ENCODE measurements at regions of chr13 and their contacts with region 1.

Region 1: DNA sequence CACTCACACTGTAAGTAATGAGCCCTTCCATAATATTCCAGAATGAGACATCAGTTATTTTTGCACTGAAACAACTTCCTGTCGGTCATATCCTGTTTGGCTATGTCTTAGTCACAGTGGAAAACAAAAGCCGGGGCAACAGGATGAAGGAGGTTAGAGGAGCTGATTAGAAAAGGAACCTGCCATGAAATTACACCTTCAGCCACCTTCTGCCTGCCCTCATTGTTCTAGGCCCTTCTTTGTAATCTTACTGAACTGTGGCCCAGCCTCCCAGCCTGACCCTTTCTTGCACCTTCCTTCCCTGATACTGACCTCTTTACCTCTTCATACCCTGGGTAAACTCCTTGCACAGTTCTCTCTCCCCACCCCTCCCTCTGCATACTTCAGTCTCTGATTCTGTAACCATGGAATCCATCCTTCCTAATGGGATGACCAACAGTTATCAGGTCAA is 67.3 kb downstream of the DOCK9 start:
- DNase-seq: no peak
- ATAC-seq: peak; percentile 60

Region 2: GRCh38 chr13:98869408-98870090 is 41.0 kb before region 1 on chr13:
- intact Hi-C with region 1: no loop called
- DNase-seq: no peak
- ATAC-seq: peak; percentile 37

Region 3: DNA sequence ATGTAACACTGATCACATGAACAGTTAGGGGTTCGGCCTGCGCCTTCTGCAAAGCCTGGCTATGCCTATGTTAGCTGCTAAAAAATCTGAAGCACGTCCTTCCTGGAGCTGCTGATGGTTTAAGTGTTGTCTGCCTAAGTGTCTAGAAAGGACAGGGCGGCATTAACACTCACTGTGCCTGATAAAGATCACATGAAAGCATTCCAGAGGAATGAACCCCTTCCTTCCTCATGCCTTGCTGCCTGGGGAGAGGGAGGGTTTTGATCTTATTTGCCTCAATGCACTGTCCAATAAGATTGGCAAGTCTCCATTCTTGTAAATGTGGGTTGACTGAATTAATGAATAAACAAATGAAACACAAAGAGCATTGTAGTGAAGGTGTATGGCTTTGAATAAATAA is 62.1 kb after region 1 on chr13:
- intact Hi-C with region 1: loop called (anchors 2 kb)
- DNase-seq: no peak
- ATAC-seq: no peak